ENCODE measurements at regions of chr20 and their contacts with region 1.

Region 1: GRCh38 chr20:354298-355064 is 7.6 kb downstream of the NRSN2 start:
- DNase-seq: peak; percentile 83
- H3K4me3 Mint-ChIP-seq: no peak overlapping the region
- H3K27ac Mint-ChIP-seq: peak overlapping the region; percentile 13
- H3K4me1 Mint-ChIP-seq: peaks cover 18% of the 10 kb centered on the region
- H3K27me3 Mint-ChIP-seq: no peaks in the 10 kb centered on the region

Region 2: GRCh38 chr20:364905-365794 is 10.7 kb after region 1 on chr20:
- CTCF ChIA-PET with region 1: interaction called, 13 read pairs
- POLR2A ChIA-PET with region 1: no interaction called
- DNase-seq: no peak
- H3K4me3 Mint-ChIP-seq: peak overlapping the region; percentile 24
- H3K27ac Mint-ChIP-seq: peak overlapping the region; percentile 81
- H3K4me1 Mint-ChIP-seq: peaks cover 46% of the 10 kb centered on the region
- H3K27me3 Mint-ChIP-seq: no peaks in the 10 kb centered on the region

Region 3: DNA sequence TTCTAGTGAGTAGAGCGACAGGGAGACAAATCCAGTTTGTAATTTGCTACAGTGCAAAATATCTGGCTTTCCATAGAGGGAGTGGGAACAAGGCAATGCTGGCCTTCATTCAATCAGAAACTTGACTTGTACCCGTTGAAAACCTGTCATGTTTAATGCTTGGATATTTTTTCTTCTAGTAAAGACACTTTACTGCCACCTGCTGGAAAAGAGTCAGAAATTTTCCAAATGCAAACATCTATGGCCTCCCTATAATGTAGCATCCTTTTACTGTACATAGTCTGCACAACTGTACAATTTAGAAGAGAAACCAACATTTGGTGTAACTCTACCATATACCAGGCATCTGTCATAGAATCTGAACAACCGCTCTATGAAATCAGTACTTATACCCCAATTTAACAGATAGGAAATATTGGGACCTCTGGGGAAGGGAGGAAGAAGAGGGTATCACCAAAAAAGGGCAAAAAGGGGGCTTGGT is 124.5 kb after region 1 on chr20:
- CTCF ChIA-PET with region 1: interaction called, 18 read pairs
- POLR2A ChIA-PET with region 1: no interaction called
- DNase-seq: peak; percentile 72
- H3K4me3 Mint-ChIP-seq: no peak overlapping the region
- H3K27ac Mint-ChIP-seq: peak overlapping the region; percentile 15
- H3K4me1 Mint-ChIP-seq: peaks cover 40% of the 10 kb centered on the region
- H3K27me3 Mint-ChIP-seq: no peaks in the 10 kb centered on the region

Measured in activated CD4-positive, alpha-beta T cell treated with anti-CD3 and anti-CD28 coated beads, Interleukin-2, amount 10 ng/mL, durations not matched to agents 7 days and 5 days (primary cell).